Dorsolateral prefrontal cortex (tissue), 120 donors: ENCODE measurements at regions of chr12 and their contacts with region 1.

Region 1: GRCh38 chr12:127677537-127678131 is 589.3 kb upstream of the TMEM132C start:
- DNase-seq: peak; percentile 63 to 88 (median 80)
- H3K4me3 ChIP-seq: no peak overlapping the region
- H3K27ac ChIP-seq: peak overlapping the region in 49 of 59 donors; percentile 3 to 83 (median 63)
- H3K27me3 ChIP-seq: no peaks in the 10 kb centered on the region
- CTCF ChIP-seq: peak; percentile 74 to 93 (median 84)

Region 2: GRCh38 chr12:127925971-127926370 is 248.3 kb after region 1 on chr12:
- intact Hi-C with region 1: loop called (anchors 5 kb)
- DNase-seq: peak; percentile 38 to 77 (median 61)
- H3K4me3 ChIP-seq: peak overlapping the region in 1 of 59 donors; percentile 18
- H3K27ac ChIP-seq: peak overlapping the region in 48 of 59 donors; percentile 1 to 86 (median 54)
- H3K27me3 ChIP-seq: no peaks in the 10 kb centered on the region
- CTCF ChIP-seq: peak; percentile 40 to 89 (median 74)

Region 3: GRCh38 chr12:128137140-128137539 is 459.5 kb after region 1 on chr12:
- intact Hi-C with region 1: no loop called
- DNase-seq: no peak
- H3K4me3 ChIP-seq: no peak overlapping the region
- H3K27ac ChIP-seq: no peak overlapping the region
- H3K27me3 ChIP-seq: no peaks in the 10 kb centered on the region
- CTCF ChIP-seq: no peak